PC-3 (cell line): ENCODE measurements at regions of chr7 and their contacts with region 1.

Region 1: GRCh38 chr7:43944286-43944685 is 18.1 kb downstream of the UBE2D4 start:
- DNase-seq: no peak
- ATAC-seq: no peak
- H3K4me3 ChIP-seq: no peak overlapping the region
- H3K27ac ChIP-seq: peak overlapping the region; percentile 76; the same call in 1 of the 2 replicates
- H3K4me1 ChIP-seq: peaks cover 16% of the 10 kb centered on the region
- H3K27me3 ChIP-seq: no peaks in the 10 kb centered on the region
- CTCF ChIP-seq: no peak

Region 2: DNA sequence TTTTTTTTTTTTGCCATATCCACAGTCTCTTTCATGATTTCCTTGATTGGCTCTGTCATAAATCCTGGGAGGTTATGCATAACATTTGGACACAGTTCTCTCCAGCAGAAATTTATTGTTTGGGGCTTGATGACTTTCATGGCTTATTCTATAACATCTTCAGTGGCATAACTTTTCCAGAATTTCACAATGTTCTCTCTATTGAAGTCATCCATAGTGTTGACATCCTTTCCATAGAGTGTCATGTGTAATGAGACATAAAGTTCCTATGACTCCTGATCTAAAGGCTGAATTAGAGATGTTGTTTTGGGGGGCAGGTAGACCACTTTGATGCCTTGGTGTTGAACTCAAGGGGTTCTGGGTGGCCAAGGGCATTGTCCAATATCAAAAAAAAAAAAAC is 398.1 kb before region 1 on chr7:
- CTCF ChIA-PET with region 1: no interaction called
- POLR2A ChIA-PET with region 1: interaction called, 10 read pairs
- intact Hi-C with region 1: no loop called
- DNase-seq: no peak
- ATAC-seq: no peak
- H3K4me3 ChIP-seq: no peak overlapping the region
- H3K27ac ChIP-seq: no peak overlapping the region
- H3K4me1 ChIP-seq: no peaks in the 10 kb centered on the region
- H3K27me3 ChIP-seq: no peaks in the 10 kb centered on the region
- CTCF ChIP-seq: no peak

Region 3: GRCh38 chr7:43869006-43869866 is 75.0 kb before region 1 on chr7 and contains the start of gene MRPS24:
- CTCF ChIA-PET with region 1: no interaction called
- POLR2A ChIA-PET with region 1: no interaction called
- intact Hi-C with region 1: no loop called
- DNase-seq: peak; percentile 88
- ATAC-seq: peak; percentile 82
- H3K4me3 ChIP-seq: peak within 1 kb of the TSS; percentile 96
- H3K27ac ChIP-seq: peak within 1 kb of the TSS; percentile 100
- H3K4me1 ChIP-seq: peaks cover 53% of the 10 kb centered on the region
- H3K27me3 ChIP-seq: no peaks in the 10 kb centered on the region
- CTCF ChIP-seq: no peak
- total RNA-seq, gene MRPS24: 199 and 200 TPM in 2 replicates